ENCODE measurements at regions of chr1 and their contacts with region 1.

Region 1: GRCh38 chr1:19400875-19401534 is 84.3 kb downstream of the CAPZB start:
- DNase-seq: no peak
- H3K4me3 ChIP-seq: no peak overlapping the region
- H3K27ac ChIP-seq: peak overlapping the region; percentile 73 to 78
- H3K4me1 ChIP-seq: peaks cover 3 to 91% (median 74%) of the 10 kb centered on the region in 4 donors
- H3K27me3 ChIP-seq: no peaks in the 10 kb centered on the region
- CTCF ChIP-seq: no peak

Region 2: DNA sequence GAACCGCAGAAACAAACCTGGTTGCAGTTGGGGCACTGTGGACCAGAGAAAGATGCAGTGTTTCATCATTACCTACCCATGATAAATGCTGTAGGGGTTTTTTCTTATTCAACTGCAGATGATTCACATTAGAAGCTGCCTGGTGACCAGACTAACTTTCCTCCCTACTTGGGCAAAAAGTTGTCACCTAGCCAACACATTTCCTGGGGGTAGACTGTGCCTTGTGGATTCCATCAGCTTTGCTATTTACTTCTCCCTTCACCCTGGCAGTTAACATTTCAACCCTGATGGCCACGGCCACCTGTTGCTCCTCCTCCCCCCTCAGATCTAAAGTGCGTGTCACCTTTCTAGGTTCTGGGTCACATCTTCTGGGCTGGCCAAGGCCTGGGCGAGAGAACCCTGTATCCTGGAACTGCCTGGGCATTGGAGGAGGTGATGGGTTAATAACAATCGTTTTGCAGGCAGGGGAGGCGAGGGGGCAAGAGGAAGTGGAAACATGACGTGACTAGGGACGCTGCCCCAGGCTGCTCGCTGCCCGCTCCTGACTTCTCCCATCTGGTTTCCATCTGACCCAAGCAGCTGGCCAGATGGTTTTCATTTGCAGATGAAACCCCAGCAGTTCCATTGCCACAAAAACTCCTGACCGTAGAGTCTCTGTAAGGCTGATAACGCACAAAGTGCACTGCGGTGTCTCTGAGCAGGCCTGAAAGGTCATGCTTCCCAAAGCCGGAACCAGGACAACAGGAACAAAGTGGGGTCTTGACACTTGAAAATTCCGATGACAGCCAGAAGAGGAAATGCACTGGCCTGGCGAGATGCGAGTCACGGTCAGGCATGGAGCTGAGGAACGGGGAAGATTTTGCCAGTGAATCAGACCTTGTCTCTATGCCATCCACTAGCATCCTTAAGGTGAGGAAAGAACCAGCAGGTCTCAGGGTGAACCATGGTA is 47.8 kb after region 1 on chr1:
- intact Hi-C with region 1: loop called (anchors 5 kb)
- DNase-seq: peak; percentile 76 to 82
- H3K4me3 ChIP-seq: no peak overlapping the region
- H3K27ac ChIP-seq: peak overlapping the region; percentile 71 to 89
- H3K4me1 ChIP-seq: peaks cover 6 to 99% (median 81%) of the 10 kb centered on the region in 4 donors
- H3K27me3 ChIP-seq: no peaks in the 10 kb centered on the region
- CTCF ChIP-seq: no peak

Measured in tibial artery (tissue), 4 donors.